ENCODE measurements at regions of chr5 and their contacts with region 1.

Region 1: GRCh38 chr5:40755407-40756365 is at the start of gene TTC33:
- DNase-seq: peak; percentile 92
- H3K4me3 ChIP-seq: peak within 1 kb of the TSS; percentile 81 to 89 (median 88)
- H3K27ac ChIP-seq: peak within 1 kb of the TSS; percentile 84
- H3K4me1 ChIP-seq: peaks cover 10% of the 10 kb centered on the region
- H3K27me3 ChIP-seq: no peaks in the 10 kb centered on the region
- CTCF ChIP-seq: peak; percentile 30 to 75
- total RNA-seq, gene TTC33: 9.6 to 9.7 TPM

Region 2: DNA sequence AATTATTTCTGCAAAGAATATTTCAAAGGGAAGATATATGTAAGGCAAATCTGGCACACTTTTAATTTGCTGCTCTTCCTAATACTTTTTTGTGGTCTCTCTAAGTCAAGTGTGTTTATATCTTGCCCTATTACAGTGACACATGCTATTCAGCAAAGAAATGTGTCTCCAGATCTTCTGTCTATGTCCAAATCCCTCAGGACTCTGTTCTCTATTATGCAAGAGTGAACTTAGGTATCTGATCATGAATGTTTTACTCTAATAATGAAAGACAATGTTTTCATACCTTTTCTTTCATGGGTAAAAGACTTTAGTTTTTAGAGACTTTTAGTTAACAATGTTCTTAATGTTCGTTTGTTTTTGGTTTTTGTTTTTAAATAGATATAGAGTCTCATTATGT is 1075.5 kb before region 1 on chr5:
- CTCF ChIA-PET with region 1: no interaction called
- dilution Hi-C with region 1: no loop called
- in situ Hi-C with region 1: no loop called
- intact Hi-C with region 1: no loop called
- DNase-seq: no peak
- H3K4me3 ChIP-seq: no peak overlapping the region
- H3K27ac ChIP-seq: no peak overlapping the region
- H3K4me1 ChIP-seq: no peaks in the 10 kb centered on the region
- H3K27me3 ChIP-seq: peaks cover 6% of the 10 kb centered on the region
- CTCF ChIP-seq: no peak

Region 3: GRCh38 chr5:40798012-40798855 is 42.5 kb after region 1 on chr5 and contains the start of gene PRKAA1:
- CTCF ChIA-PET with region 1: no interaction called
- dilution Hi-C with region 1: no loop called
- in situ Hi-C with region 1: no loop called
- intact Hi-C with region 1: loop called (anchors 1 kb)
- DNase-seq: peak; percentile 74
- H3K4me3 ChIP-seq: peak within 1 kb of the TSS; percentile 86 to 95 (median 92)
- H3K27ac ChIP-seq: peak within 1 kb of the TSS; percentile 67
- H3K4me1 ChIP-seq: peaks cover 15% of the 10 kb centered on the region
- H3K27me3 ChIP-seq: no peaks in the 10 kb centered on the region
- CTCF ChIP-seq: peak; percentile 34 to 72
- total RNA-seq, gene PRKAA1: 55.7 to 73.4 TPM

Region 4: DNA sequence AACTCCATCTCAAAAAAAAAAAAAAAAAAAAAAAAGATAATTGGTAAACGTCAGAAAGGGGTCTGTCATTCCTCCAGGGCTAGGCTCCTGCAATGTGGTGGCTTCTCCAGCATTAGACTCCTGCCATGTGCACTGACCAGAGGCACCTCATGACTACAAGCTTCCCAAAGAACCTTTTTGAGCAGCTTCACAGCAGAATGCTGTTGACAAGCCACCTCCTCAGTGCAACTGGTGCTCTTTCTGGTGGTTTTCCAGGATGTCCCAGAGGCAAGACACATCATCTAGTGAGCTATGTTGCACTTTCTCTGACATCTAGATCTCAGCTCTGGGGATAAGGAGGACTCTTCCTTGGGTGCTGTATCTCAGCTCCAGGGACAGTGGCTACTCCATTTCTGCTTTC is 67.8 kb after region 1 on chr5:
- CTCF ChIA-PET with region 1: no interaction called
- dilution Hi-C with region 1: no loop called
- in situ Hi-C with region 1: no loop called
- intact Hi-C with region 1: loop called (anchors 2 kb)
- DNase-seq: peak; percentile 9
- H3K4me3 ChIP-seq: no peak overlapping the region
- H3K27ac ChIP-seq: no peak overlapping the region
- H3K4me1 ChIP-seq: no peaks in the 10 kb centered on the region
- H3K27me3 ChIP-seq: no peaks in the 10 kb centered on the region
- CTCF ChIP-seq: no peak

Region 5: DNA sequence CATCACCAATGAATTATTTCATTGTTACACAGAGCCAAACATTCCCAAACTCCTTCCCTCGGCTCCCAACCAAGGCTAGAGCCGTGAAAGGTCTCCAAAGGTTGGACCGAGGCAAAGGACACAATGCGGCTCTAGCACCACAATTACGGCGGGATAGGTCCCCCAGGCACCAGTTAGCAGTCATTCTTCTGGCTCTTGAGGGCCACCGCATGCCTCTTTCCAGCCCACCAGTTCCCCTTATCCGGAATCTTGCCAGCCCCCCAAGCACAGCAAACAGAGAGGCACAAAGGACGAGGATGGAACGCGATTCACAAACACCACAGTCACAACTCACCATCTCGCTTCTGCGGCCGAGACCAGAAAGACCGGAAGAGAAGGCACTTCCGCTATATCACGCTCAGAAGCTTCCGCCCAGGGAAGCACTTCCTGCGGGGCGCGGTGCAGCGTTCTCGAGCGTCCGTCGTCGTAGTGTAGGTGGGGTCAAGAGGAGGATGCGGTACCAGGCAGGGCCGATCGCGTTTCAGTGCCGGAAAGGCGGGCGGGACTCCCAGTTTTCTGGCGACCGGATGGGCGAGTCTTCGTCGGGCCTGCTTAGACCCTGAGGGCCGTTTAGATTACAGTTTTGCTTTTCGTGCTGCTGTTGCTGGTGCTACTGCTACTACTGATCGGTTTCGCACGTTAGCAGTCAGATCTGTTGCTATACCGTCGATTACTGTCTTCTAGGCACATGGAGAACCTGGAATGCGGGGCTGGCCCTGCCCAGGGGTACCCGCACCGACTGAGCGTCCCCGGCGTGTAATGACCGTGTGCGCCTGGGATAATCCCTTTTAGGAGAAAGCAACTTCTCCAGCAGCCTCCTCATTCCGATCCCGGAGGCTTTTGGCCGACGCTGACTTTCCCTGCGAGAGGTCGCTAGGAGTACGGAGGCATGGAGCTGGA is 79.4 kb after region 1 on chr5 and contains the start of gene RPL37:
- CTCF ChIA-PET with region 1: no interaction called
- dilution Hi-C with region 1: no loop called
- in situ Hi-C with region 1: loop called in 1 of 2 experiments (anchors 10 kb)
- intact Hi-C with region 1: loop called (anchors 1 kb)
- DNase-seq: peak; percentile 97
- H3K4me3 ChIP-seq: peak within 1 kb of the TSS; percentile 63 to 85 (median 65)
- H3K27ac ChIP-seq: peak within 1 kb of the TSS; percentile 83
- H3K4me1 ChIP-seq: peaks cover 23% of the 10 kb centered on the region
- H3K27me3 ChIP-seq: no peaks in the 10 kb centered on the region
- CTCF ChIP-seq: no peak
- total RNA-seq, gene RPL37: 257 to 1,240 TPM